CD4-positive, alpha-beta memory T cell (primary cell): ENCODE measurements at regions of chr3 and their contacts with region 1.

Region 1: GRCh38 chr3:40452876-40453730 is 4.0 kb upstream of the RPL14 start:
- DNase-seq: peak; percentile 92 to 99 (median 96)
- H3K4me3 ChIP-seq: peak overlapping the region; percentile 80 to 81
- H3K4me3 Mint-ChIP-seq: peak overlapping the region; percentile 88 to 98 (median 94)
- H3K27ac ChIP-seq: peak overlapping the region; percentile 93
- H3K27ac Mint-ChIP-seq: peak overlapping the region; percentile 93 to 100 (median 99)
- H3K4me1 ChIP-seq: peaks cover 30% of the 10 kb centered on the region
- H3K4me1 Mint-ChIP-seq: peaks cover 23 to 47% (median 35%) of the 10 kb centered on the region in 4 donors
- H3K27me3 ChIP-seq: no peaks in the 10 kb centered on the region
- H3K27me3 Mint-ChIP-seq: no peaks in the 10 kb centered on the region

Region 2: GRCh38 chr3:39406368-39407258 is 1046.5 kb before region 1 on chr3 and contains the start of gene RPSA:
- CTCF ChIA-PET with region 1: no interaction called
- POLR2A ChIA-PET with region 1: interaction called, 3 read pairs
- intact Hi-C with region 1: loop called (anchors 1 kb)
- DNase-seq: peak; percentile 91 to 99 (median 99)
- H3K4me3 ChIP-seq: peak within 1 kb of the TSS; percentile 31 to 72
- H3K4me3 Mint-ChIP-seq: peak within 1 kb of the TSS; percentile 88 to 99 (median 96)
- H3K27ac ChIP-seq: peak within 1 kb of the TSS; percentile 81
- H3K27ac Mint-ChIP-seq: peak within 1 kb of the TSS; percentile 88 to 99 (median 98)
- H3K4me1 ChIP-seq: peaks cover 47% of the 10 kb centered on the region
- H3K4me1 Mint-ChIP-seq: peaks cover 30 to 54% (median 43%) of the 10 kb centered on the region in 4 donors
- H3K27me3 ChIP-seq: no peaks in the 10 kb centered on the region
- H3K27me3 Mint-ChIP-seq: no peaks in the 10 kb centered on the region
- total RNA-seq, gene RPSA: 1,582 to 1,688 TPM

Region 3: GRCh38 chr3:40464339-40465110 is 11.4 kb after region 1 on chr3:
- CTCF ChIA-PET with region 1: no interaction called
- POLR2A ChIA-PET with region 1: interaction called, 19 read pairs
- intact Hi-C with region 1: no loop called
- DNase-seq: peak; percentile 62 to 74 (median 70)
- H3K4me3 ChIP-seq: no peak overlapping the region
- H3K4me3 Mint-ChIP-seq: peak overlapping the region in 7 of 8 donors; percentile 0 to 64 (median 41)
- H3K27ac ChIP-seq: peak overlapping the region; percentile 25
- H3K27ac Mint-ChIP-seq: peak overlapping the region; percentile 71 to 97 (median 91)
- H3K4me1 ChIP-seq: peaks cover 28% of the 10 kb centered on the region
- H3K4me1 Mint-ChIP-seq: peaks cover 20 to 40% (median 22%) of the 10 kb centered on the region in 4 donors
- H3K27me3 ChIP-seq: no peaks in the 10 kb centered on the region
- H3K27me3 Mint-ChIP-seq: no peaks in the 10 kb centered on the region

Region 4: DNA sequence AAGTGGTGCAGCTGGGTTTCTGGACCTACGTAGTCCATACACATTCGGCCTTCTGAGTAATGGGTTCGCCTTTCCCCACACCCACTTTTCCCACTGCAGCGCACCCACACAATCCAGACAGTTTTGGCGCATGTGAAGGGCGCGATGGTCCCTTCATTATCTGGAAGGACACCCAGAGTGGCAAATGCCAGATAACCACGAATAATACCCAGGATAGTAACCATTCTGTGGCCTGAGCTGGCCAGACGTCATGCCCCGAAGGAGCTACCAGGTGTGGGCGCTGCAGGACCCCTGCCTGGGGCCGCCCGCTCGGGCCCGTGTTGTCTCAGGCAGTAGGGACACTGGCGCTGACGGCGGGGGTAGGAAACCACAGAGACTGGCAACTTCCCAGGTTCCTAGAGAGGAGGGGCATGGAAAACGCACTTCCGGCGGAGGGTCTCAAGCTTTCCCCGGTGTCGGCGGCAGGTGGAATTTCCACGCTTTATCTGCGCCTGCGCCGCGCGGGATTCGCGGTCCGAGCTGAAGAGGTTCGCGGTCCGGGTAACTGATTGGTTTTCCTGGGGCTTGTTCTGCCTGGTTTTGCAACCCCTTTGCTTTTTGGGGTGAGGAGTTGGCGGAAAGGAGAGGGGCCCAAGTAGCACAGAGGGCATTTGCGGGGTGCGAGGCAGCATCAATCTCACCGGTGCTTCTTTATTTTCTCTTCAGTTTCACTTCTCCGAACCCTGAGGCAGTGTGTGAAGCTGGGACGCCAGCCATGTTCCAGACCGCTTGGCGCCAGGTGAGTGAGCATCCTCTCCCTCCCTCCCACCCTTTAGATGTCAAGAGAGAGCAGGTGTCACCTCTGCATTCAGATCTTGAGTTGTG is 52.7 kb after region 1 on chr3 and contains the start of gene ZNF620:
- CTCF ChIA-PET with region 1: interaction called, 10 read pairs
- POLR2A ChIA-PET with region 1: interaction called, 18 read pairs
- intact Hi-C with region 1: no loop called
- DNase-seq: peak; percentile 26 to 57 (median 34)
- H3K4me3 ChIP-seq: peak within 1 kb of the TSS; percentile 74 to 92
- H3K4me3 Mint-ChIP-seq: peak within 1 kb of the TSS; percentile 95 to 98 (median 97)
- H3K27ac ChIP-seq: peak within 1 kb of the TSS; percentile 44
- H3K27ac Mint-ChIP-seq: peak within 1 kb of the TSS; percentile 70 to 95 (median 92)
- H3K4me1 ChIP-seq: peaks cover 8% of the 10 kb centered on the region
- H3K4me1 Mint-ChIP-seq: peaks cover 8 to 21% (median 14%) of the 10 kb centered on the region in 4 donors
- H3K27me3 ChIP-seq: no peaks in the 10 kb centered on the region
- H3K27me3 Mint-ChIP-seq: no peaks in the 10 kb centered on the region
- total RNA-seq, gene ZNF620: 3.7 to 3.8 TPM

Region 5: DNA sequence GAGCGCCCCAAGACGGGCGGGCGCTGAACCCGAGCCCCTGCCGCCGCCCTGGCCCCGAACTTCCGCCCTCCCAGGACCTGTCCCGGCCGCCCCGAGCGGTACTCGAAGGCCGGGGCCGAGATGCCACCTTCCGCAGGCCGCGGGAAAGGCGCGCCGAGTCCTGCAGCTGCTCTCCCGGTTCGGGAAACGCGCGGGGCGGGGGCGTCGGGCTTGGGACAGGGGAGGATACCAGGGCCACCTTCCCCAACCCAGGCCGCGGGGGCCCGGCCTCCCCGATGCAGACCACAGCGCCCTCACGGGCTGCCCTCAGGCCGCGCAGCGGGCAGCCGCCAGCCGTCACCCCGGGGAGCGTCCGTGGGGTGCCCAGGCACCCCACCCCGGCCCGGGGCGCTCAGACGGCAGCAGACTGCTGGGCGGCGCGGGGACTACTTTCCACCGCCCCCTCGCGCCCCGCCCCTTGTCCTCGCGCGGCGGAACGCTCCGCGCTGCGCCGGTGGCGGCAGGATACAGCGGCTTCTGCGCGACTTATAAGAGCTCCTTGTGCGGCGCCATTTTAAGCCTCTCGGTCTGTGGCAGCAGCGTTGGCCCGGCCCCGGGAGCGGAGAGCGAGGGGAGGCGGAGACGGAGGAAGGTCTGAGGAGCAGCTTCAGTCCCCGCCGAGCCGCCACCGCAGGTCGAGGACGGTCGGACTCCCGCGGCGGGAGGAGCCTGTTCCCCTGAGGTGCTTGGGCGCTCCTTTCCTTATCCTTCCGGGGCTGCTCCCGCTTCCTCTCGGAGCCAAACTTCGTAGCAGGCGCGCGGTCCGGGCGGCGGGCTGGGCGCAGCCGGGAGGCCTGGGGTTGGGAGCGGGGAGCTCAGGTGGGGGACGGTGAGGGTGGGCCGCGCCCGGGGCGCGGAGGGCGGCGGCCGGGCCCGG is 746.1 kb after region 1 on chr3 and contains the start of gene CTNNB1:
- CTCF ChIA-PET with region 1: no interaction called
- POLR2A ChIA-PET with region 1: interaction called, 13 read pairs
- intact Hi-C with region 1: loop called (anchors 2 kb)
- DNase-seq: peak; percentile 90 to 92 (median 91)
- H3K4me3 ChIP-seq: peak within 1 kb of the TSS; percentile 83 to 89
- H3K4me3 Mint-ChIP-seq: peak within 1 kb of the TSS; percentile 94 to 99 (median 96)
- H3K27ac ChIP-seq: peak within 1 kb of the TSS; percentile 96
- H3K27ac Mint-ChIP-seq: peak within 1 kb of the TSS; percentile 91 to 98 (median 95)
- H3K4me1 ChIP-seq: peaks cover 41% of the 10 kb centered on the region
- H3K4me1 Mint-ChIP-seq: peaks cover 28 to 43% (median 35%) of the 10 kb centered on the region in 4 donors
- H3K27me3 ChIP-seq: no peaks in the 10 kb centered on the region
- H3K27me3 Mint-ChIP-seq: peaks cover under 1 to 1% of the 10 kb centered on the region in 2 donors
- total RNA-seq, gene CTNNB1: 175 to 176 TPM